HEK293T (cell line): ENCODE measurements at regions of chr22 and their contacts with region 1.

Region 1: GRCh38 chr22:37608477-37609239 is at the start of gene GGA1:
- DNase-seq: peak; percentile 98

Region 2: DNA sequence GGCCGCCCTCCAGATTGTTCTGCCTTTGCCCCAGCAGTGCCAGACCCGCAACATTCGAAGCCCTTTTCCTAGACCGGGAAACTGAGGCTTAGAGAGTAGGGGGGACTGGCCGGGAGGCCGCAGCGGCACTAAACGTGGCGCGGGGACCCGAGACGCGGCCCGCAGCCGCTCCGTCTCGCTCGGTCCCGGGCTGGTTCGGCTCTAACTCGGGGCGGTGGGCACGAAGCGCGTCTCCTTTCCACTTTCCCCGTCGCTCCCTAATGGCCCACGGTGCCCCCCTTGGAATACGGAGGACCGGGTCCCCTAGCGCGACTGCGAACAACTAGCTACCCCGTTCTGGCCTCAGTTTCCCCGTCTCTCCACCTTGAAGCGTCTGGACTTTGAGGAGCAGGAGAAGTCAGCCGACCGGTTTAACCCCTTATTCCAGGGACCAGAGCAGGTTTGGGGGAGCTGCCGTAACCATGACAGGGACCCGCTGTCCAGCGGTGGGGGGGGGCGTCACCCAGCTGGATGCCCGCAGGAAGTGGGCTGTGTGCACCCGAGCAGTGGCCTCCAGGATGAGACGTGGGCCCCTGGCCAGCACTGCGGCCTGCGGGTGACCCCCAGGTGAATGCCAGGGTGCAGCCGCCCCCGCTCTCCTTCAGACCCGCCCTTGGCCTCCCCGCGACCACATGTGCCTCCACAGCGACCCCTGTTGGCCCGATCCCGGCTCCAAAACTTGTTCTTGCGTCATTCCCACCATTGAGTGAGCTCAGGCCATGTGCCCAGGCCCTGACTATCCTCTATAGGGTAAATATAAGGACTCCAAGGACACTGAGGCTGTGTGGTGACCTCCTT is 47.2 kb before region 1 on chr22:
- CTCF ChIA-PET with region 1: interaction called, 4 read pairs
- POLR2A ChIA-PET with region 1: interaction called, 11 read pairs
- DNase-seq: peak; percentile 94

Region 3: GRCh38 chr22:37633625-37634416 is 25.2 kb after region 1 on chr22:
- CTCF ChIA-PET with region 1: interaction called, 4 read pairs
- POLR2A ChIA-PET with region 1: interaction called, 16 read pairs
- DNase-seq: no peak

Region 4: GRCh38 chr22:37658133-37659065 is 49.7 kb after region 1 on chr22 and contains the start of gene PDXP:
- CTCF ChIA-PET with region 1: interaction called, 4 read pairs
- POLR2A ChIA-PET with region 1: interaction called, 37 read pairs
- DNase-seq: peak; percentile 98